ENCODE measurements at regions of chr10 and their contacts with region 1.

Region 1: GRCh38 chr10:73940634-73941221 is 29.8 kb downstream of the PLAU start:
- DNase-seq: peak; percentile 91
- ATAC-seq: peak; percentile 100
- H3K4me3 Mint-ChIP-seq: no peak overlapping the region
- H3K27ac Mint-ChIP-seq: no peak overlapping the region
- H3K4me1 Mint-ChIP-seq: peaks cover 4% of the 10 kb centered on the region
- H3K27me3 Mint-ChIP-seq: no peaks in the 10 kb centered on the region

Region 2: DNA sequence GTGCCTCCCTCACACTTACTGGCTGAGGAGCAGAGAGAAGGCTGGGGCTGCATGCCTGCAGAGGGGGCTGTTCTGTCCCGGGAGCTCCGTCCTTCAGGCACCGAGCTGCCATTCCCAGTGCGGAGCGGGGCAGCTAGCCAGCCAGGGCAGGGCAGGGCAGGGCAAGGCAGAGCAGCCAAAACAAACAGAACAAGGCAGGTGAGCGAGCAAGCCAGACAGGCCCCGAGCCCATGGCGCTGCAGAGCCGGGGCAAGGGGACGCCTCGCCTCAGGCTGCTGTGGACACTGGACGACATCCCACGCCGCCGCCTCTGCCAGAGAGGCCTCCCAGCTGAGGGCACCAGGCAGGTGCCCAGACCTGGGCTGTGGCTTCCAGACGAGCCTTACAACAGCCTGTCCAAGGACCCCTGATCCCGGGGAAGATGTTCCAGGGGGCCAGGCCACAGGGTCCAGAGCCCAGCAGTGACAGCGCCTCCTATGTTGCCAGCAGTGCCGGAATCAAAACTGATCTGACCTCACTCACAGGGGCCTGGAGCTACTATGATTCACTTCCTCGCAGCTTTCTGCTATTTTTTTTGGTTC is 121.1 kb before region 1 on chr10:
- CTCF ChIA-PET with region 1: no interaction called
- POLR2A ChIA-PET with region 1: no interaction called
- intact Hi-C with region 1: no loop called
- DNase-seq: no peak
- ATAC-seq: no peak
- H3K4me3 Mint-ChIP-seq: no peak overlapping the region
- H3K27ac Mint-ChIP-seq: no peak overlapping the region
- H3K4me1 Mint-ChIP-seq: no peaks in the 10 kb centered on the region
- H3K27me3 Mint-ChIP-seq: no peaks in the 10 kb centered on the region

Region 3: DNA sequence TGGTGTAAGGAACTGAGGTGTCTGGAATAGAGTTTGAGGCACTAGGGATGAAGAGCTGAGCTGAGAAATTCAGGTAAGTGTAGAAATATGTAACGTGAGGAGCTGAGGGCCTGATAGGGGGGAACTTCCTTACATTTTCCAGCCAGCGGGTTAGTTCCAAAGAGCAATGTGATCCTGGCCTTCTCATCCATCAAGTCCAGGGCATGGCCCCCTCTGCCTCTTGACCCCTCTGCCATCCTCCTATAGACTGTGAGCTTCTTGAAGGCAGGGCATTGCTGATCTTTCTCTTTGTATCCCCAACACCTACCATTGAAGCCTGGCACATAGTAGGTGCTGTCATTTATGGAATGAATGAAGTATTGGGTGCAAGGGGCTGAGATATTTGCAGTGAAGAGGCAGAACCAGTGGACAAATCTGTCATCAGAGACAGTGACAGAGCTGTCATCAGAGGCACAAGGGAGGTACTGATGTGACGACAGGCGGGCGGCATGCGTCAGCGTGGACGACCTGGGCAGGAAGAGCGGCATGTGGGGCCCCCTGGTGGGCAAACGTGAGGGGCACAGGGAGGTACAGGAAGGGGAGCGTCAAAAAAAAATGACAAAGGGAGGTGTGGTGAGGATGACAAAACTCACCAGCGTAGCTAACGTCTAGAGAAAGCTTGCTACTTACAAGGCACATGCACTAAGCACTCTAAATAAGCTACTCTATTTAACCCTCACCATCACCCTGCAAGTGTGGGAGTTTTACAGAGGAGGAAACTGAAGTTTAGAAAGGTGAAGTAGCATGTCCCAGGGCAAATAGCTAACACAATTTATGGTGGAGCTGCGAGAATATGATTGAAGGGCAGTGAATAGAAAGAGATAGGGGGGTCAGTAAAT is 61.2 kb before region 1 on chr10:
- CTCF ChIA-PET with region 1: interaction called, 375 read pairs
- POLR2A ChIA-PET with region 1: interaction called, 4 read pairs
- intact Hi-C with region 1: loop called in 1 of 2 experiments (anchors 2 kb)
- DNase-seq: peak; percentile 98
- ATAC-seq: peak; percentile 86
- H3K4me3 Mint-ChIP-seq: no peak overlapping the region
- H3K27ac Mint-ChIP-seq: peak overlapping the region; percentile 71
- H3K4me1 Mint-ChIP-seq: peaks cover 45% of the 10 kb centered on the region
- H3K27me3 Mint-ChIP-seq: no peaks in the 10 kb centered on the region

Region 4: GRCh38 chr10:73908853-73909538 is 31.7 kb before region 1 on chr10:
- CTCF ChIA-PET with region 1: interaction called, 9 read pairs
- POLR2A ChIA-PET with region 1: no interaction called
- intact Hi-C with region 1: loop called in 1 of 2 experiments (anchors 1 kb)
- DNase-seq: peak; percentile 72
- ATAC-seq: peak; percentile 76
- H3K4me3 Mint-ChIP-seq: peak overlapping the region; percentile 44
- H3K27ac Mint-ChIP-seq: peak overlapping the region; percentile 6
- H3K4me1 Mint-ChIP-seq: peaks cover 36% of the 10 kb centered on the region
- H3K27me3 Mint-ChIP-seq: peaks cover 46% of the 10 kb centered on the region

Region 5: GRCh38 chr10:73926152-73926764 is 14.5 kb before region 1 on chr10:
- CTCF ChIA-PET with region 1: interaction called, 24 read pairs
- POLR2A ChIA-PET with region 1: no interaction called
- intact Hi-C with region 1: no loop called
- DNase-seq: no peak
- ATAC-seq: no peak
- H3K4me3 Mint-ChIP-seq: no peak overlapping the region
- H3K27ac Mint-ChIP-seq: no peak overlapping the region
- H3K4me1 Mint-ChIP-seq: peaks cover 15% of the 10 kb centered on the region
- H3K27me3 Mint-ChIP-seq: peaks cover 26% of the 10 kb centered on the region

Region 6: DNA sequence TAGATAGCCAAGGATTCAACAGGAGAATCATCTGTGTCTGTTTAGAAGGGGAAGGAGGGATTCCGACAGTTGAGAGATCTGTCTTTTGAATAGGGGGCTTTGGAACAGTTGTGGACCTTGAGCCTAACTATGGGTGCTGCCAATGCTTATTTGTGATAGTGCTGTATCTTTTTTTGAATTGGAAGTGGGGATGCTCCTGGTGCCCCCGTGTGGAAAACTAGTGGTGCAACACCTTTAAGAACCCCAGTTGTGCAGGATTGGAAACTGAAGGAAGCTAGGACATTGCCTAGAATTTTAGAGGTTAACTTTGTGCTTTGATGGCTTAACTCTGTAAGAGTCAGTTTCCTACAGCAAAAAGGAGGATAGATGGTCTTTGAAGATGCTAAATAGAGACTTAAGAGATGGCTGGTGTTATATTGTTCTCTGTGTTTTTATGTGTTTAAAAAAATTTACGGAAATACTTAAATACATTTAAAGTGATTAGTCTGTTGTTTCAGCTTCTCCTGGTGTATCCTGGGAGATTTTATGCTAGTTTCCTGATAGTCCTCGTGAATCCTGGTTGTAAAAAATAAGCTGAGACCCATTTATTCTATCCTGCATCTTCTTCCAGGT is 140.6 kb after region 1 on chr10:
- CTCF ChIA-PET with region 1: interaction called, 12 read pairs
- POLR2A ChIA-PET with region 1: no interaction called
- intact Hi-C with region 1: no loop called
- DNase-seq: peak; percentile 63
- ATAC-seq: peak; percentile 37
- H3K4me3 Mint-ChIP-seq: no peak overlapping the region
- H3K27ac Mint-ChIP-seq: no peak overlapping the region
- H3K4me1 Mint-ChIP-seq: peaks cover 41% of the 10 kb centered on the region
- H3K27me3 Mint-ChIP-seq: no peaks in the 10 kb centered on the region

Measured in activated CD4-positive, alpha-beta T cell treated with anti-CD3 and anti-CD28 coated beads for 36 hours (primary cell).